Breast epithelium (tissue), 4 donors: ENCODE measurements at regions of chr2 and their contacts with region 1.

Region 1: GRCh38 chr2:58376592-58376991 is 135.5 kb upstream of the FANCL start:
- DNase-seq: no peak
- H3K4me3 ChIP-seq: no peak overlapping the region
- H3K27ac ChIP-seq: no peak overlapping the region
- H3K4me1 ChIP-seq: no peaks in the 10 kb centered on the region
- H3K27me3 ChIP-seq: no peaks in the 10 kb centered on the region
- CTCF ChIP-seq: no peak
- POLR2A ChIP-seq: no peak

Region 2: GRCh38 chr2:58313916-58314315 is 62.7 kb before region 1 on chr2:
- intact Hi-C with region 1: no loop called
- DNase-seq: no peak
- H3K4me3 ChIP-seq: no peak overlapping the region
- H3K27ac ChIP-seq: no peak overlapping the region
- H3K4me1 ChIP-seq: no peaks in the 10 kb centered on the region
- H3K27me3 ChIP-seq: no peaks in the 10 kb centered on the region
- CTCF ChIP-seq: no peak
- POLR2A ChIP-seq: no peak

Region 3: GRCh38 chr2:58350484-58350883 is 26.1 kb before region 1 on chr2:
- intact Hi-C with region 1: loop called (anchors 2 kb)
- DNase-seq: no peak
- H3K4me3 ChIP-seq: no peak overlapping the region
- H3K27ac ChIP-seq: no peak overlapping the region
- H3K4me1 ChIP-seq: no peaks in the 10 kb centered on the region
- H3K27me3 ChIP-seq: no peaks in the 10 kb centered on the region
- CTCF ChIP-seq: no peak
- POLR2A ChIP-seq: no peak

Region 4: DNA sequence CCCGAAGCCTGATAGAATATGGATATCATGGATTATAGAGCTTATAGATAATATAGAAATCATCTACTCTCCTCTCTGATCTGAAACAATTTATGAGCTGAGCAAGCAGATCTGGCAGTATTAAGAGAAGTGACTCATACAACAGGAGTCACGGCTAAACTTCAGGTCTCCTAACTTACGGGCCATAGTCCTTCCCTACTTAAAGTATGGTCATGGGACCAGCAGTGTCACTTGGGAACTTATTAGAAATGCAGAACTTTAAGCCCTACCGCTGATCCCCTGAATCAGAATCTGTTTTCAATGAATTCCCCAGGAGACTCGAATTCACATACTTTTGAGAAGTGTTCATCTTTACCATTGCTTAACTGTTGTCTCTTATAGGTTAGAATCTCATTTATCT is 60.3 kb after region 1 on chr2:
- intact Hi-C with region 1: no loop called
- DNase-seq: no peak
- H3K4me3 ChIP-seq: no peak overlapping the region
- H3K27ac ChIP-seq: no peak overlapping the region
- H3K4me1 ChIP-seq: no peaks in the 10 kb centered on the region
- H3K27me3 ChIP-seq: no peaks in the 10 kb centered on the region
- CTCF ChIP-seq: no peak
- POLR2A ChIP-seq: no peak